Adrenal gland (tissue), 19 donors: ENCODE measurements at regions of chr3 and their contacts with region 1.

Region 1: GRCh38 chr3:69791919-69792399 is 52.7 kb downstream of the MITF start:
- DNase-seq: no peak
- H3K4me3 ChIP-seq: no peak overlapping the region
- H3K27ac ChIP-seq: peak overlapping the region in 2 of 5 donors; percentile 10 to 35
- H3K4me1 ChIP-seq: peaks cover 14 to 31% of the 10 kb centered on the region in 2 donors
- H3K27me3 ChIP-seq: no peaks in the 10 kb centered on the region
- CTCF ChIP-seq: peak; percentile 29 to 83 (median 68)
- POLR2A ChIP-seq: no peak

Region 2: DNA sequence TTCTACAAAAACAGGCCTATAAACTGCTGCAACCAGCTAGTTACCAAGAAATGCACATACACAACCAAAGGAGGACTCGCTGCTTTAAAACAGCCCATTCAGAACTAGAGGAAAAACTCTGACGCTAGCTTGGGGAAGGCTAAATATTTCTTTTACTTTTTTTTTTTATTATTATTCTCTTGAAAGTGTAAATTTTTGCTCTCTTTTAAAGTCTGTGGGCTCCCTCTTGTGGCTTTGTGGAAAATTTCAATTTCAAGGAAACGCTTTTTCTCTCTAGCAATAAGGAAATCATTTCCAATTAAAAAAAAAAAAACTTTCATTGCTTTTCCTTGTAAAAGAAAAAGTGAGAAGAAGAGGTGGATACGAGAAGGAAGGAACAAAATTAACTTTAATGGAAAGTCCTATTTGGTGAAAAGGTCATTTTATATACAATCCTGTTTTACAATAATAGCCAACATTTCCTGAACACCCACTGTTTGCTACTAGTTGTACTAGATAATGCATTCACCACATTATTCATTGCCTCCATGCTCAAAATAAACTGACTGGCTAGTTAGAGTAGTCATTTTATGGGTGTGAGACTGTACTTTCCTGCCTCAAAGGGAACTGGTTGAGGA is 156.4 kb after region 1 on chr3:
- intact Hi-C with region 1: loop called in 1 of 2 experiments (anchors 10 kb)
- DNase-seq: no peak
- H3K4me3 ChIP-seq: no peak overlapping the region
- H3K27ac ChIP-seq: no peak overlapping the region
- H3K4me1 ChIP-seq: no peaks in the 10 kb centered on the region
- H3K27me3 ChIP-seq: no peaks in the 10 kb centered on the region
- CTCF ChIP-seq: peak; percentile 28 to 75 (median 58)
- POLR2A ChIP-seq: no peak